K562 (cell line): ENCODE measurements at regions of chr2 and their contacts with region 1.

Region 1: GRCh38 chr2:27016801-27017325 is 15.9 kb upstream of the TMEM214 start:
- DNase-seq: peak; percentile 69 to 90 (median 72)
- ATAC-seq: peak; percentile 70
- H3K4me3 ChIP-seq: no peak overlapping the region
- H3K27ac ChIP-seq: peak overlapping the region; percentile 91
- H3K4me1 ChIP-seq: peaks cover 62 to 87% of the 10 kb centered on the region in 2 experiments
- H3K27me3 ChIP-seq: no peaks in the 10 kb centered on the region
- CTCF ChIP-seq: peak; percentile 79 to 87 (median 85)
- EP300 ChIP-seq: 0 out of 2 replicates have a peak, but pooled peaks have one; percentile 20
- POLR2A ChIP-seq: no peak
- RAD21 ChIP-seq: peak; percentile 93 to 94

Region 2: GRCh38 chr2:26846328-26847306 is 170.2 kb before region 1 on chr2:
- CTCF ChIA-PET with region 1: interaction called, 7 read pairs
- POLR2A ChIA-PET with region 1: interaction called, 4 read pairs
- in situ Hi-C with region 1: loop called (anchors 5 kb)
- intact Hi-C with region 1: loop called (anchors 2 kb)
- DNase-seq: peak; percentile 64 to 83 (median 68)
- ATAC-seq: peak; percentile 94
- H3K4me3 ChIP-seq: no peak overlapping the region
- H3K27ac ChIP-seq: no peak overlapping the region
- H3K4me1 ChIP-seq: peaks cover 0 to 35% of the 10 kb centered on the region in 2 experiments; a peak in 2 of 5 replicates
- H3K27me3 ChIP-seq: peaks cover 49 to 70% of the 10 kb centered on the region in 2 experiments
- CTCF ChIP-seq: peak; percentile 86 to 96 (median 96)
- EP300 ChIP-seq: no peak
- POLR2A ChIP-seq: no peak
- RAD21 ChIP-seq: peak; percentile 89 to 90

Region 3: DNA sequence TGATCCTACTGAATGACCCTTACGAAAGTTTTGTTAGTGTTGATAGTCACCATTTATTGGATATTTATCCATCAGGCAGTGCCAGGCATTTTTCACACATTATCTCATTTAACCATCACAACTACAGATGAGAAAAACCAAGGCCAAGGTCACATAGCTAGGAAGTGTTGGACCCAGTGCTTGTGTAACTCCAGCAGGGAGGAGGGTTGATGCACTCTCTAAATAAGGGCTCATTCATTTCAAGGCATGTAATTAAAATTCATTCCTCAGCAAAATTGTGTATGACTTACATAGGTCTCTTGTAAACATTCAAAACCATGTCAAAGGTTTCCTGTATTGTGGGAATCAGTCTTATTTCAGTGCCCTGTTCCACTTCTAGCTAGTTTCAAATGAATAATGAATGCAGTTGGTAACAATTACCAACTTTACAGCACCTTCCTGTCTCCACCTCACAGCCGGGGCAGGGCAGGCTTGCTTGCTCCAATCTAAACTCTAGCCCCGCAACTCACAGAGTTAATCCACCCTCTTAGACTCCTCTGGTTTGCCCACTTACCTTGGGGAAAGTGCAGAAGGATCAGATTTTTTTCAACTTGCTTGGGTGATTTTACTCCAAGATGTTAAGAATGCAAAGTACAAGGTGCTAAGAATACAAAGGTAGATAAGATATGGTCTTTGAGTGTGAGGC is 52.3 kb before region 1 on chr2:
- CTCF ChIA-PET with region 1: interaction called, 65 read pairs
- POLR2A ChIA-PET with region 1: interaction called, 13 read pairs
- in situ Hi-C with region 1: loop called (anchors 5 kb)
- intact Hi-C with region 1: loop called (anchors 1 kb)
- DNase-seq: no peak
- ATAC-seq: no peak
- H3K4me3 ChIP-seq: no peak overlapping the region
- H3K27ac ChIP-seq: no peak overlapping the region
- H3K4me1 ChIP-seq: peaks cover 5 to 6% of the 10 kb centered on the region in 2 experiments; a peak in 3 of 5 replicates
- H3K27me3 ChIP-seq: peaks cover 5 to 16% of the 10 kb centered on the region in 2 experiments; a peak in 1 of 5 replicates
- CTCF ChIP-seq: no peak
- EP300 ChIP-seq: no peak
- POLR2A ChIP-seq: no peak
- RAD21 ChIP-seq: no peak

Region 4: DNA sequence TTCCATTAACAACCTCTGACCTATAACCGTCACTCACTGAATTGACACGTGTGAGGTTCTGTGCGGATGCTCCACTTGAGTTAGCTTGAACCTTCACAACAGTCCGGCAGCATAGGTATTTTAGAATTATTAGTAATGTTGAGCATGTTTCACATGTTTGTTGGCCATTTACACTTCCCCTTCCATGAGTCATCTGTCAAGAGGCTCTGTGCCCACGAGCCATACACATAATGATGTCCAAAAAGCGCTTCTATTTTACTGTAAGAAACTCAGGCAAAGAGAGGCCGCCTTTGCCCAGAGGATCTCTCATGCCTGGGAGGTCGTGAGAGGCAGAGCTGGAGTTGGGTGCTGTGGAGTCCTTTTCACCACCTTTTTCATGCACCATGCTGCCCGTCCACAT is 13.0 kb before region 1 on chr2:
- CTCF ChIA-PET with region 1: interaction called, 3 read pairs
- POLR2A ChIA-PET with region 1: interaction called, 7 read pairs
- in situ Hi-C with region 1: no loop called
- intact Hi-C with region 1: loop called (anchors 1 kb)
- DNase-seq: no peak
- ATAC-seq: no peak
- H3K4me3 ChIP-seq: no peak overlapping the region
- H3K27ac ChIP-seq: peak overlapping the region; percentile 42
- H3K4me1 ChIP-seq: peaks cover 32 to 88% of the 10 kb centered on the region in 2 experiments
- H3K27me3 ChIP-seq: no peaks in the 10 kb centered on the region
- CTCF ChIP-seq: no peak
- EP300 ChIP-seq: no peak
- POLR2A ChIP-seq: no peak
- RAD21 ChIP-seq: no peak

Region 5: DNA sequence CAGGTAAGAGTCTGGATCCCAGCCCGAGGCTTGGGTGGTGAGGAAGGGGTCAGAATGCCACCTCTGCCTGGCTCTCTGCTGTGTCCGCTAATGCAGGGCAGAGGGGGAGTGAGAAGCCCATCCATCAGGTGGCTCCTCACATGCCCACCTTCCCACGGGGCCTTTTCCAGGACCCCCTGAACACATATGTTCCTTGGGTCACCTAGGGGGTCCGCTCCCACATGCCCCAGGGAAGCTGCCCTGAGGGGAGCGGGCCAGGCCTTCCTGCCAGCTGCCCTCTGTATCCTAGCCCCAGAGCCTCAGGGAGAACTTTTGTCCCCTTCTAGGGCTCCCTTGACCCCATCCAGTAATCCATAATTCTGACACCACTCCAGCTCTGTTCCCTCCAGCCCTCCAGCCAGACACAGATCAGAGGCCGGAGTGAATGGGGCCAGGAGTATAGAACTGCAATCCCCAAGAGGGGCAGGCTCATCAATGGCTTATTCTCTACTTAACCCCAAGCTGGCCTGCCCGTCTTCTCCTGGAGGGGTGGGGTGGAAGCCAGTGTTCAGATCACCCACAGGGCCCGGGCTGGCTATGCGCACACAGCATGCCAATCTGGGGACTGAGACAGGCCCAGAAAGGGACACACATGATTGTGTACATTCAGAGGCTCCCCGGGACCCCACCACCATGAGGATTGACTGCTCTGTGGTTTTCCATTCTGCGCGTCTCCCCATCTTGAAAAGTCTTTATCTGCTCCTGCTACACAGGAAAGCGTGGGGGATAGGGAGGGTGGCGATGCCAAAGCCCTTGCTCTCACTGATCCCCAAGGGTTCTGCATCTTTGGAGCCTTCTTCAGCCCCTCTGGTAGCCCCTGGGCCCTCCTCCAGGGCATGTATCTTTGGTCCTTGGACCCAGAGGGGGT is 62.6 kb after region 1 on chr2:
- CTCF ChIA-PET with region 1: no interaction called
- POLR2A ChIA-PET with region 1: no interaction called
- in situ Hi-C with region 1: no loop called
- intact Hi-C with region 1: loop called (anchors 1 kb)
- DNase-seq: no peak
- ATAC-seq: no peak
- H3K4me3 ChIP-seq: no peak overlapping the region
- H3K27ac ChIP-seq: no peak overlapping the region
- H3K4me1 ChIP-seq: peaks cover 63 to 65% of the 10 kb centered on the region in 2 experiments
- H3K27me3 ChIP-seq: no peaks in the 10 kb centered on the region
- CTCF ChIP-seq: no peak
- EP300 ChIP-seq: no peak
- POLR2A ChIP-seq: no peak
- RAD21 ChIP-seq: no peak

Region 6: GRCh38 chr2:27191053-27191829 is 174.4 kb after region 1 on chr2:
- CTCF ChIA-PET with region 1: no interaction called
- POLR2A ChIA-PET with region 1: no interaction called
- in situ Hi-C with region 1: no loop called
- intact Hi-C with region 1: loop called (anchors 5 kb)
- DNase-seq: peak; percentile 54 to 79 (median 62)
- ATAC-seq: peak; percentile 98
- H3K4me3 ChIP-seq: no peak overlapping the region
- H3K27ac ChIP-seq: no peak overlapping the region
- H3K4me1 ChIP-seq: no peaks in the 10 kb centered on the region; a peak in 2 of 5 replicates
- H3K27me3 ChIP-seq: no peaks in the 10 kb centered on the region
- CTCF ChIP-seq: peak; percentile 79 to 93 (median 82)
- EP300 ChIP-seq: no peak
- POLR2A ChIP-seq: no peak
- RAD21 ChIP-seq: peak; percentile 91

Region 7: GRCh38 chr2:28544919-28545589 is 1528.2 kb after region 1 on chr2:
- CTCF ChIA-PET with region 1: no interaction called
- POLR2A ChIA-PET with region 1: no interaction called
- in situ Hi-C with region 1: no loop called
- intact Hi-C with region 1: no loop called
- DNase-seq: no peak
- ATAC-seq: no peak; the same call in 1 of the 3 replicates
- H3K4me3 ChIP-seq: no peak overlapping the region
- H3K27ac ChIP-seq: no peak overlapping the region
- H3K4me1 ChIP-seq: peaks cover 4 to 9% of the 10 kb centered on the region in 2 experiments; a peak in 3 of 5 replicates
- H3K27me3 ChIP-seq: peaks cover 46 to 66% of the 10 kb centered on the region in 2 experiments; a peak in 4 of 5 replicates
- CTCF ChIP-seq: no peak
- EP300 ChIP-seq: no peak
- POLR2A ChIP-seq: no peak
- RAD21 ChIP-seq: no peak